A549 (cell line): ENCODE measurements at regions of chr6 and their contacts with region 1.

Region 1: DNA sequence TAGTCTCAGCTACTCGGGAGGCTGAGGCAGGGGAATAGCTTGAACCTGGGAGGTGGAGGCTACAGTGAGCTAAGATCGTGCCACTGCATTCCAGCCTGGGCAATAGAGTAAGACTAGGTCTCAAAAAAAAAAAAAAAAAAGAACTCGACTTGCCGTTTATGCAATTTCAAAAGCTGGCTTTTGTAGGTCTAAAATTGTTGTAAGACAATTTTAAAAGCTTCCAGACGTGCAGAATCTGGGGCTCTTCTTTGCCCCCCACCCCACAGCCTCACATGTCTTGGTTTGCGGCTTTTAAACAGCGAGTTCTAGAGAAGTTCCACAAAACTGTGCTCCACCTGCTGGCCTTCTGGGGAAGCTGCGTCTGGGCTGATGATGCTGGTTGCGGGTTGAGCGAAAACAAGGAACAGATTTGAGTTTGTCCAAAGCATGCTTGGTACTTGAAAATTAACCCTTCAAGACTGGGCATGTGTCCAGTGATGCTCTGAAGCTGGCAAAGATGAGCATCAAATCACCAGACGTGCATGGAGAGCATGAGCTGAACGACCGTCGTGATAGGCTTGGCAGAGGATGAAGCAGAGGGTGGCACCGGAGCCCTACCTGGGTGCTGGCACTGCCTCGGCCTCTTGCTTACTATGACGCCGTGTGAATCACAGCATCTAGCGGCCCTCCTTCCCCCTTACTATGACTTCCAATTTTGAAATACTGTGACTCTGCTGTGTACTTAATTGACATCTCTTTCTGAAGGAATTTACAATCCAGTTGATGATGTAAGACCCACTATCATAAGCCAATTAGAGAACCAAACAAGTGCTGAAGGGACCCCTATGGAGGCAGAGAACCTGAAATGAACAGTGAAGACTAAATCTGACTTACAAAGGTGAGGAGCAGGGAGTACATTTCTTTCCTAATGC is 171.4 kb downstream of the GMPR start:
- DNase-seq: peak; percentile 24 to 60
- ATAC-seq: peak; percentile 88 to 92
- H3K4me3 ChIP-seq: no peak overlapping the region
- H3K27ac ChIP-seq: no peak overlapping the region
- H3K4me1 ChIP-seq: peaks cover 5% of the 10 kb centered on the region; the same call in 2 of the 3 replicates
- CTCF ChIP-seq: peak; percentile 56
- EP300 ChIP-seq: no peak
- POLR2A ChIP-seq: no peak
- RAD21 ChIP-seq: peak; percentile 52 to 56

Region 2: DNA sequence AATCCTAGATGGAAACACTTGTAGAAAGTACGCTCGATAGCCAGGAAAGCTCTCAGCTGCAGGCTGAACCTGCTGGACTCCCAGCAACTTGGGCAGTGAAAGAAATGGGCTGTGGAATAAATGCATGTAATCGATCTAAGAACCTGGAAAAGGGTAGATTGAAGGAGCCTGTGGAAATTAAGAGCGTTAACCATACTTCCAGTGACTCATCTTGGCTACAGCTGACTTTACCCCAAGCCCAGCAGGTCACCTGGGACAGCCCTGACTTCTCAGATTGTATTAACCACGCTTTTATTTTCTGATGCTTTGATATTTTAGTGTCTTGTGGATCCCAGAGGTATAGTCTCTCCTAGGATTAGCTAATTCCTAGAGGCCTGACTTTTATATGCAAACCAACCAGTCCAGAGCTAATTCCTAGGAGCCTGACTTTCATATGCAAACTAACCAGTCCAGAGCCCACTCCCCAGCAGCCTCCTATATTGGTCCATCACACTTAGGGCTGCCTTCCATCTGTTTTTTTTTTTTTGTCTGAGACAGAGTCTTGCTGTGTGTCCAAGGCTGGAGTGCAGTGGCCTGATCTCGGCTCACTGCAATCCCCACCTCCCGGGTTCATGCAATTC is 85.1 kb before region 1 on chr6:
- CTCF ChIA-PET with region 1: interaction called, 13 read pairs
- POLR2A ChIA-PET with region 1: no interaction called
- DNase-seq: no peak
- ATAC-seq: no peak
- H3K4me3 ChIP-seq: no peak overlapping the region
- H3K27ac ChIP-seq: no peak overlapping the region
- H3K4me1 ChIP-seq: peaks cover 7% of the 10 kb centered on the region; the same call in 1 of the 3 replicates
- CTCF ChIP-seq: no peak
- EP300 ChIP-seq: no peak
- POLR2A ChIP-seq: no peak
- RAD21 ChIP-seq: no peak

Region 3: DNA sequence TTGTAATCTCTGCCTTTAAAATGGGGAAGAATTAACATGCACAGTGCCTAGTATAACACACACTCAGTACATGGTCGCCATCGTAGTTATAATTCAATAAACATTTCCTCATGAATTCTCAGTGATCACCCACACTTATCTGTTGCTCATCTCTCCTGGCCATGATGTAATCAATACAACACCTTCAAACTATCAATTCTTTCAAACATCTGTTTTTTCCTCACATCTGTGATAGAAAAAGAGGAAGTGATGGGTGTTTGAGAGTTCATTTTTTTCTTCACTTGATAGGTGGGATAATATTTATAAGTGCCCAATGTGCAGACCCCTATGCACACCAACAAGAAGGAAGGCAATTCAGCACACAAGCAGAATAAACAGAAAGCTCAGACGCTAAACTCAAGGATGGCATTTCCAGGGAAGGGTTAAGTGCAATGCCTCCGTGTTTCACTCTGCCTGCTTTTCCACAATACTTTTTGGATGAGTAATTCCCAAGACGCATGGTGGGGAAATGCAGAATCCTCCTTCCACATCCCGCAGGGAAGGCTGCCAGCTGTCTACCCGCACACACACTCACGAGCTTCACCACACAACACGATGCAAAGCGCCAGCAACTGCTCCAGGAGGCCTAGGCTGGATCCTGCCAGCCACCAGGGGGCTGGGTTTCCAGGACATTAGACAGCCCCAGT is 71.1 kb before region 1 on chr6:
- CTCF ChIA-PET with region 1: interaction called, 46 read pairs
- POLR2A ChIA-PET with region 1: no interaction called
- DNase-seq: peak; percentile 51 to 58
- ATAC-seq: peak; percentile 92 to 95
- H3K4me3 ChIP-seq: no peak overlapping the region
- H3K27ac ChIP-seq: peak overlapping the region; percentile 43 to 76; a peak in 5 of 6 replicates
- H3K4me1 ChIP-seq: peaks cover 49% of the 10 kb centered on the region
- CTCF ChIP-seq: peak; percentile 33; the same call in 2 of the 3 replicates
- EP300 ChIP-seq: no peak
- POLR2A ChIP-seq: no peak
- RAD21 ChIP-seq: peak; percentile 12 to 26; a peak in 1 of 5 replicates